H1 (cell line): ENCODE measurements at regions of chr11 and their contacts with region 1.

Region 1: DNA sequence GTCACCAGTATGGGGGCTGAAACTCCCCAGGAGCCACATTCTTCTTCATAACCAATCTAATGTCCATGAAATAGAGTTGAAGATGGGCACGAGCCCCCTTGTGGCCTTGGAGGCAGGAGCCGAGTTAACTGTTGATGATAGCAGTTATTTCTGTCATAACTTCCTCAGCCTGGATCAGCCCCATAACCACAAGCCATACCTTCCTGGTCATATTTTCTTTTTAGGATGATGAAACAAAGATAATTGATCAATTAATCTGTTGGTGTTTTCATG is 65.0 kb upstream of the TTC12 start:
- DNase-seq: no peak
- H3K4me3 ChIP-seq: no peak overlapping the region
- H3K27ac ChIP-seq: no peak overlapping the region
- H3K4me1 ChIP-seq: peaks cover 0 to 9% (median under 1%) of the 10 kb centered on the region in 4 experiments; a peak in 4 of 7 replicates
- H3K27me3 ChIP-seq: no peaks in the 10 kb centered on the region
- CTCF ChIP-seq: peak; percentile 26 to 51 (median 33); a peak in 3 of 4 replicates
- EP300 ChIP-seq: no peak
- POLR2A ChIP-seq: no peak
- RAD21 ChIP-seq: peak; percentile 36 to 37

Region 2: DNA sequence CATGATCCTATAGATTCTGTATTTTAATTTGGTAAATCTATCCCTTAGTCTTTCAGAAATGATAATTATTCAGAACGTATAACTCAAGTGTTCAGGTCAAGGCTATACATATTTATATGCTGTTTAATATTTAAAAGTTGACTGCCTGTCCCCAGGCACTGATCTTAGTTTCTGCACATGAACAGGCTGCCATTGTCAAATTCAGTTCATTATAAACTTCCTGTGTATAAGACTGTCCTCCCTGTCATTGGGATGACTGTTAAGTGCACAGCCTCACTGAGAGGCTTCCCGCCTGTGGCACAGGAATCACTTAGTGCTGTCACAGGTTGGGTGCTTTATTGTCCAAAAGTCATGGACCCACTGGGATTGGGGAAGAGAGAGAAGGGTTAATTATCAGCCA is 27.2 kb before region 1 on chr11:
- CTCF ChIA-PET with region 1: no interaction called
- POLR2A ChIA-PET with region 1: no interaction called
- DNase-seq: no peak
- H3K4me3 ChIP-seq: no peak overlapping the region
- H3K27ac ChIP-seq: no peak overlapping the region
- H3K4me1 ChIP-seq: no peaks in the 10 kb centered on the region
- H3K27me3 ChIP-seq: no peaks in the 10 kb centered on the region; a peak in 1 of 7 replicates
- CTCF ChIP-seq: no peak
- EP300 ChIP-seq: no peak
- POLR2A ChIP-seq: no peak
- RAD21 ChIP-seq: no peak

Region 3: GRCh38 chr11:113238721-113239120 is 10.7 kb before region 1 on chr11:
- CTCF ChIA-PET with region 1: interaction called, 11 read pairs
- POLR2A ChIA-PET with region 1: interaction called, 3 read pairs
- DNase-seq: no peak
- H3K4me3 ChIP-seq: no peak overlapping the region
- H3K27ac ChIP-seq: no peak overlapping the region
- H3K4me1 ChIP-seq: peaks cover 0 to 8% (median 6%) of the 10 kb centered on the region in 4 experiments; a peak in 4 of 7 replicates
- H3K27me3 ChIP-seq: no peaks in the 10 kb centered on the region
- CTCF ChIP-seq: no peak
- EP300 ChIP-seq: no peak
- POLR2A ChIP-seq: no peak
- RAD21 ChIP-seq: no peak